ENCODE measurements at regions of chr22 and their contacts with region 1.

Region 1: GRCh38 chr22:35526333-35526979 is 14.2 kb upstream of the RASD2 start:
- DNase-seq: no peak
- H3K4me3 ChIP-seq: no peak overlapping the region
- H3K27ac ChIP-seq: no peak overlapping the region
- H3K4me1 ChIP-seq: peaks cover 0 to 10% (median 6%) of the 10 kb centered on the region in 4 experiments
- H3K27me3 ChIP-seq: peaks cover 0 to under 1% (median 0%) of the 10 kb centered on the region in 5 experiments

Region 2: GRCh38 chr22:35538775-35539321 is 12.4 kb after region 1 on chr22:
- CTCF ChIA-PET with region 1: interaction called, 12 read pairs
- POLR2A ChIA-PET with region 1: no interaction called
- DNase-seq: peak in 2 of 3 donors; percentile 26 to 37
- H3K4me3 ChIP-seq: no peak overlapping the region
- H3K27ac ChIP-seq: no peak overlapping the region
- H3K4me1 ChIP-seq: peaks cover 0 to 28% (median 26%) of the 10 kb centered on the region in 4 experiments
- H3K27me3 ChIP-seq: peaks cover 0 to 52% (median 24%) of the 10 kb centered on the region in 5 experiments

Measured in common myeloid progenitor, CD34-positive (primary cell).